HepG2 (cell line): ENCODE measurements at regions of chr2 and their contacts with region 1.

Region 1: GRCh38 chr2:83817511-83817910 is 641.6 kb downstream of the SUCLG1 start:
- DNase-seq: no peak
- ATAC-seq: peak; percentile 34; the same call in 1 of the 3 replicates
- H3K4me3 ChIP-seq: no peak overlapping the region
- H3K27ac ChIP-seq: no peak overlapping the region
- H3K4me1 ChIP-seq: no peaks in the 10 kb centered on the region
- H3K27me3 ChIP-seq: no peaks in the 10 kb centered on the region
- CTCF ChIP-seq: peak; percentile 44
- EP300 ChIP-seq: no peak
- POLR2A ChIP-seq: no peak
- RAD21 ChIP-seq: no peak

Region 2: GRCh38 chr2:82344670-82345069 is 1472.8 kb before region 1 on chr2:
- CTCF ChIA-PET with region 1: no interaction called
- POLR2A ChIA-PET with region 1: no interaction called
- in situ Hi-C with region 1: no loop called
- intact Hi-C with region 1: loop called (anchors 5 kb)
- DNase-seq: peak; percentile 21
- ATAC-seq: no peak
- H3K4me3 ChIP-seq: no peak overlapping the region
- H3K27ac ChIP-seq: no peak overlapping the region
- H3K4me1 ChIP-seq: no peaks in the 10 kb centered on the region
- H3K27me3 ChIP-seq: no peaks in the 10 kb centered on the region; a peak in 1 of 5 replicates
- CTCF ChIP-seq: 0 out of 2 replicates have a peak, but pooled peaks have one; percentile 8
- EP300 ChIP-seq: no peak
- POLR2A ChIP-seq: no peak
- RAD21 ChIP-seq: no peak

Region 3: DNA sequence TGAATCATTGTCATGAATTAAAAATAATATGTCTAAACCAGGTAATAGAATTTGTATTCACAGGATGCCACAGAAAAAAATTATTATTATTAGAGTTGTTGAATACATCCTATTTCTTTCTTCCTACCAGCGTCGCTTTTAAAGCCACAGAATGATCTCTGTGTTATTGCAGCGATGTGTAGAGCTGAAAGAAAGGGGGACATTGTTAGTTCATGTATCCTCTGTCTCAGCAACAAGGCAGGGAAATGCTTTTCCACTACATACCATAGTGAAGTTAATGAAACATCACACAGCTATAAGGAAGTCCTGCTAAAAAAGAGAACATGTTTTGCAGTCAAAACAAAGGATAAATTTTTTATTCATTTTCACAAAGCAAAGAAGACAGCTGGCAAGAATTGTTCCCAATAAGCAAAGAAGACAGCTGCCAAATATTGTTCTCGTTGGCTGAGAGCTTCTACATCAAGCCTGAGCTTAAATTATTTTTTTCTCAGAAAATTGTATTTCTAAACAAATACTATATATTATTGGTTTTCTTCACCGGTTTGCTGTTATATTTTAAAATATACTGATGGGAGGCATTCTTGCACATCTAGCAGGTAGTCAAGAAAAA is 592.8 kb before region 1 on chr2:
- CTCF ChIA-PET with region 1: no interaction called
- POLR2A ChIA-PET with region 1: no interaction called
- in situ Hi-C with region 1: no loop called
- intact Hi-C with region 1: no loop called
- DNase-seq: no peak
- ATAC-seq: no peak
- H3K4me3 ChIP-seq: no peak overlapping the region; a peak in 1 of 6 replicates
- H3K27ac ChIP-seq: no peak overlapping the region
- H3K4me1 ChIP-seq: no peaks in the 10 kb centered on the region
- H3K27me3 ChIP-seq: no peaks in the 10 kb centered on the region
- CTCF ChIP-seq: no peak
- EP300 ChIP-seq: no peak
- POLR2A ChIP-seq: no peak
- RAD21 ChIP-seq: no peak

Region 4: DNA sequence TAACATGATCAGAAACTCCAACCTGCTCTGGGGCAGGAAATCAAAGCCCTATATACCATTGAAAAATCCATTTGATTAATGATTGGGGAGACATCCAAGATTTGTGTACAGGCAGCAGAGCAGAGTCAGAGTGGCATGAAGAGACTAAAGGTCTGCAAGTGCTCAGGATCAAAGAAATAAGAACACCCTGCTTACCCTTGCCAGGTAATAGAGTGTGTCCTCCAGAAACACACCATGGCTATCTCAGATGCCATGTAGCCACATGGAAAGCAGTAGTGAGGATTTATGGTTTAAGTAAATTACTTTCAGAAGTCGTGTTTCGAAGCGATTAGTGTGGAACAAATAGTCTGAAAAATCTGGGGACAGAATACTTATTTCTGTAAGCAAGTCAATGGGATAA is 48.7 kb after region 1 on chr2:
- CTCF ChIA-PET with region 1: no interaction called
- POLR2A ChIA-PET with region 1: no interaction called
- in situ Hi-C with region 1: no loop called
- intact Hi-C with region 1: no loop called
- DNase-seq: no peak
- ATAC-seq: no peak
- H3K4me3 ChIP-seq: no peak overlapping the region
- H3K27ac ChIP-seq: no peak overlapping the region
- H3K4me1 ChIP-seq: no peaks in the 10 kb centered on the region
- H3K27me3 ChIP-seq: no peaks in the 10 kb centered on the region
- CTCF ChIP-seq: no peak
- EP300 ChIP-seq: no peak
- POLR2A ChIP-seq: no peak
- RAD21 ChIP-seq: no peak